ENCODE measurements at regions of chr12 and their contacts with region 1.

Region 1: GRCh38 chr12:116726694-116727093 is 11.2 kb downstream of the SPRING1 start:
- DNase-seq: no peak
- H3K4me3 ChIP-seq: no peak overlapping the region
- H3K27ac ChIP-seq: no peak overlapping the region
- H3K4me1 ChIP-seq: peaks cover 6% of the 10 kb centered on the region
- H3K27me3 ChIP-seq: no peaks in the 10 kb centered on the region
- CTCF ChIP-seq: no peak
- EP300 ChIP-seq: no peak
- POLR2A ChIP-seq: no peak

Region 2: DNA sequence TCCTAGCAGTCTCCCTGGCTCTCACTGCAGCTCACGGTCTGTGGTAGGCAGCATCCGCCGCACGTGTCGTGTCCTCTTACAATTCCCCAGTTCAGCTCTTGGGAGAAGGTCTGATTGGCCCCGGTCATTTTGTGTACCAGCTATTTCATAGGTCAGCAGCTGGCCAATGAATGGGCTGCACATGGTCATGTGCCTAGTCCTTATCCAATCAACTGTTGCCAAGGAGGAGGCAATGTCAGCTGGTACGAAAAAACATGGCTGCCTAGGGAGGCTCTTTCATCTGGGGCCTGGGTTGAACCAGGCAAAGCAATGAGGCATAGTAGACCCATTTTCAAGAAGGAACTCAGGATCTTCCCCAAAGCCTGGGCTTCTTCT is 57.5 kb after region 1 on chr12:
- intact Hi-C with region 1: no loop called
- DNase-seq: no peak
- H3K4me3 ChIP-seq: no peak overlapping the region
- H3K27ac ChIP-seq: no peak overlapping the region
- H3K4me1 ChIP-seq: no peaks in the 10 kb centered on the region
- H3K27me3 ChIP-seq: no peaks in the 10 kb centered on the region
- CTCF ChIP-seq: no peak
- EP300 ChIP-seq: no peak
- POLR2A ChIP-seq: no peak

Region 3: GRCh38 chr12:118016424-118017264 is 1290.0 kb after region 1 on chr12 and contains the start of gene RFC5:
- intact Hi-C with region 1: loop called in 1 of 4 experiments (anchors 10 kb)
- DNase-seq: peak; percentile 97 to 99 (median 99)
- H3K4me3 ChIP-seq: peak within 1 kb of the TSS; percentile 96
- H3K27ac ChIP-seq: no peak within 1 kb of the TSS
- H3K4me1 ChIP-seq: peaks cover 6% of the 10 kb centered on the region
- H3K27me3 ChIP-seq: no peaks in the 10 kb centered on the region
- CTCF ChIP-seq: no peak
- EP300 ChIP-seq: no peak
- POLR2A ChIP-seq: no peak
- total RNA-seq, gene RFC5: 13.0 to 20.9 (median 14.9) TPM